ENCODE measurements at regions of chr11 and their contacts with region 1.

Region 1: GRCh38 chr11:74255741-74256369 is 55.6 kb downstream of the P4HA3 start:
- H3K4me3 ChIP-seq: no peak overlapping the region
- H3K27ac ChIP-seq: no peak overlapping the region
- H3K4me1 ChIP-seq: no peaks in the 10 kb centered on the region
- CTCF ChIP-seq: peak; percentile 43; the same call in 1 of the 2 replicates

Region 2: DNA sequence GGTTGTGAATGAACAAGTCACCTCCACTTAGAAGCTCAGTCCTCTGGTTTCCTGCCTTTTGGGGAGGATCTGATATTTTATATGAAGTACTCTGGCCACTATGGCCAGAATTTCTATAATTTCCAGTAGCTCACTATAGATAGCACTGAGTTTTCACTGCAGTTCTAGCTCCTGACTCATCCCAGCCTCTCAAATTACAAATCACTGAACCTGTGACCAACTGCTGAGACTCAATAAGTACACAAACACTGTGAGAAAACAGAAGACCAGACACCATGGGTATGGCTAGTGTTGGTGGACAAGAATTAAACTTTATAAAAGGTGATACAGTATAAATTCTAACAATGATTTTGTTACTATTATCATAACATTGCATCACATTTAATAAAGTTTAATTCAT is 199.9 kb before region 1 on chr11:
- CTCF ChIA-PET with region 1: no interaction called
- POLR2A ChIA-PET with region 1: no interaction called
- H3K4me3 ChIP-seq: no peak overlapping the region
- H3K27ac ChIP-seq: no peak overlapping the region
- H3K4me1 ChIP-seq: no peaks in the 10 kb centered on the region
- CTCF ChIP-seq: no peak

Region 3: GRCh38 chr11:74124226-74124625 is 131.6 kb before region 1 on chr11:
- CTCF ChIA-PET with region 1: no interaction called
- POLR2A ChIA-PET with region 1: no interaction called
- H3K4me3 ChIP-seq: no peak overlapping the region
- H3K27ac ChIP-seq: no peak overlapping the region
- H3K4me1 ChIP-seq: no peaks in the 10 kb centered on the region
- CTCF ChIP-seq: no peak

Region 4: DNA sequence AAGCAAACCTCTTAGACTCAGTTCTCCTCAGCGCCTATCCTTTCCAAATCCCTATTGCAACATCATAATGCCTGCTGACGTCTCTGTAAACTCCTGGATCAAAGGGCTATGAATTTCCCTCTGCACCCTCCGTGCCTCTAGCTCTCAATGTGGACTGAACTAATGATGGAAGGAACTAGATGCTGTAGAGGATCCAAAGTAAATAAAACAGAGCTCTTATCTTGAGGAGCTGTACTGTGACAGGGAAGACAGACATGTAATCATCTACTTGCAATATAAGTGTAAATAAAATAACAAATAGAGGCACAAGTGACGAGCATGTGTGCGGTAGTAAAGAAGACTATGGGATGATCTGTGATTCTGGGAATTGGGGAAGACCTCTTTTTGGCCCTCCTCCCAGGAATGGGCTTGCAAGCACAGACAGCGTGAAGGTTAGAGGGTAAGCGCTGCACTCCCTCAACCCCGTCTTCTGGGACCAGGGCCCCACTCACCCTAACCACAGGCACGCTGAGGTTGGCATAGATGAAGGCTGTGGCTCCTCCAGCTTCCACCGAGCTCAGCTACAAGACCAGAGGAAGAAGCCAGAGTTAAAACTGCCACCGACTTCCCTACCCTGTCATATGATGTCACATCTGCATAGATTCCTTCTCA is 13.4 kb after region 1 on chr11:
- CTCF ChIA-PET with region 1: interaction called, 10 read pairs
- POLR2A ChIA-PET with region 1: no interaction called
- H3K4me3 ChIP-seq: no peak overlapping the region
- H3K27ac ChIP-seq: no peak overlapping the region
- H3K4me1 ChIP-seq: 0 out of 2 replicates have a peak, but pooled peaks cover 3% of the 10 kb centered on the region
- CTCF ChIP-seq: no peak

Region 5: DNA sequence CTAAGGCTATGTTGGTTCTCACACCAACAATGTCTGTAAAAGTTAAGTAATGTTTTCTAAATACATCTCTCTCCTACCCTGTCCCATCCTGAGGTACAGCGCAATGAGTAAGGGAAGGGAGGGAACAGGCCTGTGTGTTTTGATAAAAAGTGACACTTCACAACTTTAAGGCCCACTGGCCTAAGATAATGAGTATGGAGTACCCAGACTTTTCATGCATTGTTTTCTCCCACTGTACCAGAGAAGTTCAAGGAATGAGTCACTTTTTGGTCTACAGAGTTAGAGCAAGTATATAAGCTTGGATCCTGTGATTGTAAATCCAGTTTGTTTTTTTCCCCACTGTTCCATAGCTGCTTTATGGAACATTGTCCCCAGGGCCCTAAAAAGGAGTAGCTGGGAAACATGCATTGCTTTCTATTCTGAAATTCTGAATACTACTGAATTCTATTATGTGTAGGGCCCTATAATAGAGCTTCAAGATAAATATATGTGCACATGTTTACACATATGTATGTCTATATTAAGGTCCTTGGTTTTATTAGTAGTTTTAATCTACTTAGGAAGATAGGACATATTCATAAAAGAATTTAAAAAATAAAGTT is 181.7 kb after region 1 on chr11:
- CTCF ChIA-PET with region 1: interaction called, 221 read pairs
- POLR2A ChIA-PET with region 1: no interaction called
- H3K4me3 ChIP-seq: no peak overlapping the region
- H3K27ac ChIP-seq: no peak overlapping the region
- H3K4me1 ChIP-seq: no peaks in the 10 kb centered on the region
- CTCF ChIP-seq: no peak

Region 6: DNA sequence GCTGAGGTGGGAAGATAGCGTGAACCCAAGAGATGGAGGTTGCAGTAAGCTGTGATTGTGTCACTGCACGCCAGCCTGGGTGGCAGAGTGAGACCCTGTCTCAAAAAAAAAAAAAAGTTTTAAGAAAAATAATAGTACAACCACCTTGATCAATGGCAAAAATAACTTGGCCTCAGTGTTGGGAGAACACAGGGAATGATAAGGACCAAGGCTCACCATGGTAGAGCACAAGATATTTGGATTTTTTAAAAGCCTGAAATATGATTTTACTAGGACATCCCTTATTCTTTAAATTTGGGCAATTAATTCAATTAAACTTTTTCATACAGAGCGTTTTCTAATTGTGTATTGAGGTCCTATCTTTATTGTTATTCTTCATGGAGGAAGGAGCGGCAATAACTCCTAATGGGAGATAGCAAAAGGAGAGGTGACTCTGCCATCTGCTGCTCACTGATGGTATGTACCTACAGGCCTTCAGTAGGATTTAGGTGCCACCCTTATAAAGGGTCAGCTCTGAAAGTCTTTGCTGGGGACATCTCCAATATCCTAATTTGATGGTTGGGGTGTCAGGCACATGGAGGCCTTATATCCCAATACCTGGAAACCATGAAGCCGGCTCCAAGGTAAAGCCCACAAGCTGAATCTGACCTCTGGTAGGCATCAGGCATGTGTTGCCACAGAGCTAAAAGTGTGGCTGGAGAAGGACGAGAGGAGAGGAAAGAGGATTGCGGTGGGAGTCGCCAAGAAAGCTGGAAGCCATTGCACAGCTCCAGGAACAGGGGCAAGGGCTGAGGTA is 314.6 kb after region 1 on chr11:
- CTCF ChIA-PET with region 1: interaction called, 18 read pairs
- POLR2A ChIA-PET with region 1: no interaction called
- H3K4me3 ChIP-seq: no peak overlapping the region
- H3K27ac ChIP-seq: no peak overlapping the region
- H3K4me1 ChIP-seq: no peaks in the 10 kb centered on the region
- CTCF ChIP-seq: no peak; the same call in 1 of the 2 replicates

Measured in HEK293 (cell line).